Naive thymus-derived CD4-positive, alpha-beta T cell (primary cell): ENCODE measurements at regions of chr2 and their contacts with region 1.

Region 1: DNA sequence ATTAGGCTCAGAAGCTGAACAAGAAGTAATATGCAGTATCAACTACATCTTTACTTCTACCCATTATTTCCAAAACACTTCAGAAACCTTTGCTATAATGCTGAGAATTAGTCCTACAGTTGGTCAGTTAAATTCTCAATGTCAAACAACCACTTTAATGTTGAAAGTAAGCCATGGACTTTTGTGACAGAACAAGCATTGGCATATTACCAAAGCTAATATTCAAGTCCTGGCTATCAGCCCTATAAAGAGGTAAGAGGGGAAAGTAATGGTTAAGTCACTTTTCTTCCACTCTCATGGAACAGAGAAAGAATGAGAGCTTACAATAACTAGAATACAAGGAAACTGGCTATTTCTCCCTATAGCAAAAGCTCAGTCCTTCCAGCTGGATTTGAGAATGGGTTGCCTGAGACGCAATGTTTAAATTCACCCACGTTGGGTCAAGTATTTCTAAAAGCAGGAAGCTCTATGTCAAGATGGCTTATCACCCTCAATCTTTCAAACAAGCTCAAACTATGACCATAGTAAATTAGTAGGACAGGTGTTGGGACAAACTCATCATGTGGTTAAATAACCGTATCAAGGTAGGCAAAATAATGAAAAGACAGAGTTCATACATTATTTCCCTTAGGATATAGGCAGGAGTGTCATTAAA is 31.4 kb upstream of the MFSD6 start:
- DNase-seq: no peak
- ATAC-seq: no peak
- H3K4me3 ChIP-seq: no peak overlapping the region
- H3K4me3 Mint-ChIP-seq: no peak overlapping the region
- H3K27ac ChIP-seq: no peak overlapping the region
- H3K27ac Mint-ChIP-seq: no peak overlapping the region
- H3K4me1 ChIP-seq: no peaks in the 10 kb centered on the region
- H3K4me1 Mint-ChIP-seq: peaks cover 0 to 5% (median 0%) of the 10 kb centered on the region in 7 donors
- H3K27me3 ChIP-seq: no peaks in the 10 kb centered on the region
- H3K27me3 Mint-ChIP-seq: peaks cover 0 to 3% (median 0%) of the 10 kb centered on the region in 5 donors

Region 2: DNA sequence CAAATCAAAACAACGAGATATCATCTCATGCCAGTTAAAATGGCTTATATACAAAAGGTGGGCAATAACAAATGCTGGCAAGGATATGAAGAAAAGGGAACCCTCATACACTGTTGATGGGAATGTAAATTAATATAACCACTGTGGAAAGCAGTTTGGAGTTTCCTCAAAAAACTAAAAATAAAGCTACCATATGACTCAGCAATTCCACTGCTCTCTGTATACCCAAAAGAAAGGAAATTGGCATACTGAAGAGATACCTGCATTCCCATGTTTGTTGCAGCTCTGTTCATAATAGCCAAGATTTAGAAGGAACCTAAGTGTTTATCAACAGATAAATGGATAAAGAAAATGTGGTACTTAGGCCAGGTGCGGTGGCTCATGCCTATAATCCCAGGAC is 439.0 kb before region 1 on chr2:
- CTCF ChIA-PET with region 1: no interaction called
- POLR2A ChIA-PET with region 1: no interaction called
- intact Hi-C with region 1: no loop called
- DNase-seq: no peak
- ATAC-seq: no peak
- H3K4me3 ChIP-seq: no peak overlapping the region
- H3K4me3 Mint-ChIP-seq: no peak overlapping the region
- H3K27ac ChIP-seq: no peak overlapping the region
- H3K27ac Mint-ChIP-seq: no peak overlapping the region
- H3K4me1 ChIP-seq: no peaks in the 10 kb centered on the region
- H3K4me1 Mint-ChIP-seq: no peaks in the 10 kb centered on the region
- H3K27me3 ChIP-seq: no peaks in the 10 kb centered on the region
- H3K27me3 Mint-ChIP-seq: peaks cover 0 to 19% (median 9%) of the 10 kb centered on the region in 5 donors

Region 3: GRCh38 chr2:190023861-190024260 is 352.9 kb before region 1 on chr2:
- CTCF ChIA-PET with region 1: no interaction called
- POLR2A ChIA-PET with region 1: no interaction called
- intact Hi-C with region 1: loop called (anchors 1 to 5 kb)
- DNase-seq: peak in 7 of 9 donors; percentile 2 to 32 (median 18)
- ATAC-seq: peak; percentile 54
- H3K4me3 ChIP-seq: no peak overlapping the region
- H3K4me3 Mint-ChIP-seq: no peak overlapping the region
- H3K27ac ChIP-seq: no peak overlapping the region
- H3K27ac Mint-ChIP-seq: no peak overlapping the region
- H3K4me1 ChIP-seq: no peaks in the 10 kb centered on the region
- H3K4me1 Mint-ChIP-seq: no peaks in the 10 kb centered on the region
- H3K27me3 ChIP-seq: no peaks in the 10 kb centered on the region
- H3K27me3 Mint-ChIP-seq: peaks cover 14 to 53% (median 32%) of the 10 kb centered on the region in 5 donors

Region 4: DNA sequence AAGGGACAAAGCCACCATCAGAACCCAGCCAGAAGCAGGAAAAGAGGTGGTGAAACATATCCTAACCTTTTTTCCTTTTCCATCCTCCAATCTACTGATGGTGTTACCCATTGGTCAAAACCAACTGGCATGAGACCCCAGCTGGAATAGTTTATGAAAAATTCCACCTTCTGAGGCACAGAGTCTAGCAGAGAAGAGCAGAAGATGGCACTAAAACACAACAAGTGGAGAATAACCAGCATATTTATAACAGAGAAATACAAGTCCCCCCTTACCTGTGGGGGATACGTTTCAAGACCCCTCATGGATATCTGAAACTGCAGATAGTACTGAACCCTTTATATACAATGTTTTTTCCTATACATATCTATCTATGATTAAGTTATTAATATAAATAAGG is 38.3 kb before region 1 on chr2:
- CTCF ChIA-PET with region 1: no interaction called
- POLR2A ChIA-PET with region 1: no interaction called
- intact Hi-C with region 1: loop called in 1 of 2 experiments (anchors 1 kb)
- DNase-seq: peak in 1 of 9 donors; percentile 11
- ATAC-seq: no peak
- H3K4me3 ChIP-seq: no peak overlapping the region
- H3K4me3 Mint-ChIP-seq: no peak overlapping the region
- H3K27ac ChIP-seq: no peak overlapping the region
- H3K27ac Mint-ChIP-seq: no peak overlapping the region
- H3K4me1 ChIP-seq: no peaks in the 10 kb centered on the region
- H3K4me1 Mint-ChIP-seq: peaks cover 0 to 11% (median 5%) of the 10 kb centered on the region in 7 donors
- H3K27me3 ChIP-seq: no peaks in the 10 kb centered on the region
- H3K27me3 Mint-ChIP-seq: peaks cover 0 to 45% (median 0%) of the 10 kb centered on the region in 5 donors

Region 5: DNA sequence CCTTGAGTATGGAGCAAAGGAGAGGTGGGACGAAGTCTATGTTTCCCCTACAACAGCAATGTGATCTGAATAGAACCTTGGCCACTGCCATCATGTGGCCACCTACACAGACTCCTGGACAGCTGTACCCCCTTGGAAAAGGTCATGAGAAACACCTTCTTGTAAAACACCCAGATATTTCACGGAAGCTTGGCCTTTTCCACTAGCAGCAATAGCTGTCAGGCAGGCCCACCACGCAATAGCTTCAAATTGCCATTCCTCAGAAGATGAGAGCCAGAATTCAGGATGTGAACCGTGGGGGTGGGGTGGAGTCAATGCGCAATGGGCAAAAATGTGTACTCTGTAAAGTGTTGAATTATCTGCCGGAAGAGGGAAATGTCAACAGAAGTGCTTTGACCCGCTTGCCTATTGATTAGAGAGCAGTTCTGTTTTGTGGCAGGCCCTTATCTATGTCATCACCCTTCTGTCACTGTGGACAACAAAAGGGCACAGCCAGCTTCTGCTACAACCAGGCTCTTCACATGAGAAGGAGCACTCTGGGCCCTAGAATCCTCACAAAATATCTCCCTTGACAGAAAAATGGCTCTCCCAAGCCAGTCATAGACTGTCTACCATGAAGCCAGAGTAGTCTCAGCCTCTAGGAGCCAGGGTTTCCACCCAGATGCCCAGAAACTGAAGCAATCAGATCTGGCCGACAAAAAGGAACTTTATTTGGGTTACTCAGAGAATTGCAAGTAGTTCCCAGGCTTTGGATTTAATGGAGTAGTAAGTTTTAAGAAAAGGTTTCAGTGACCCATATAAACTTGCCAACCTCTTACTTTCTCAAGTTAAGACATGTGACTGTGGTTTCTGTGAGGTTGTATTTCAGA is 23.8 kb before region 1 on chr2:
- CTCF ChIA-PET with region 1: no interaction called
- POLR2A ChIA-PET with region 1: no interaction called
- intact Hi-C with region 1: loop called in 1 of 2 experiments (anchors 2 kb)
- DNase-seq: no peak
- ATAC-seq: peak; percentile 60
- H3K4me3 ChIP-seq: no peak overlapping the region
- H3K4me3 Mint-ChIP-seq: no peak overlapping the region
- H3K27ac ChIP-seq: no peak overlapping the region
- H3K27ac Mint-ChIP-seq: no peak overlapping the region
- H3K4me1 ChIP-seq: no peaks in the 10 kb centered on the region
- H3K4me1 Mint-ChIP-seq: no peaks in the 10 kb centered on the region
- H3K27me3 ChIP-seq: no peaks in the 10 kb centered on the region
- H3K27me3 Mint-ChIP-seq: peaks cover 0 to 13% (median 4%) of the 10 kb centered on the region in 5 donors